Dendritic cell treated with granulocyte-macrophage colony-stimulating factor and Interleukin-4, amounts not matched to agents 40 ng/mL and 50 ng/mL, for 4 days (primary cell): ENCODE measurements at regions of chr1 and their contacts with region 1.

Region 1: DNA sequence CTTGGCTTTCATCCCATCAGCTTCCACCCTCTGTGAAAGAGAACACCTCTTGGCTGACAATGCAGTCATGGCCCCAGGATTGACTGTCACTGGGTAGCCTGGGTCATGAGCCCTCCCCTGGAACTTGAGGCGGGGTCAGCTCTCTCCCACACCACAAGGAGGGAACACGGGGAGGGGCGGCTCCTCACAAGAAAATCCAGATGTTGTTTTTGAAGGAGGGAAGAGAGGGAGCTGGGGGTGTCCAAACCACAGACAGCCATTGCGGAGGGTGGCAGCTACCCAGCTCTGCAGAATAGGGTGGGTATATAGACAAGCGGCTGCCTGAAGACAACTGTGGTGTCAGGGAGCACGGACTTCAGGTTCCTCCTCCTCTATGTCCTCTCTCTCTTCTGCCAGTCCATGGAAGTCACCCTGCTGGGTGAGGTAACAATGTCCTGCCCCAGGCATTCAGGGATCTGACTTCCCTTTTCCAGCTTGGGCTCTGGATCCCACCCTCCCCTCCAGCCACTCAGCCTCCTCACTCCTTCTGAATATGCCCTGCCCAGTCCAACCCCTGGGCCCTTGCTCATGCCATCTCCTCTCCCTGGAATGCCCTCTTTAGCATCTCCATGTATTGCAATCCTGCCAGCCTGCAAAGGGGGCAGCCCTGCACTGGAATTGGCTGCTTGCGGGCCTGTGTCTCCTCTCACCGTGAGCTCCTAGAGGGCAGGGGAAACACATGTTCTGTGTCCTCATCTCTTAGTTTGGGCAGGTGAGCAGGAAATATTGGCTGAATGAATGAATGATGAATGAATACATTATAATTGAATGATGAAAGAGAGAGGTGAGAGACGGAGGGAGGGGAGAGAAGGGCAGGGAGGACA is 60.9 kb upstream of the RUNX3 start:
- H3K4me3 Mint-ChIP-seq: no peak overlapping the region
- H3K27ac Mint-ChIP-seq: peak overlapping the region; percentile 86
- H3K4me1 Mint-ChIP-seq: peaks cover 65% of the 10 kb centered on the region
- H3K27me3 Mint-ChIP-seq: peaks cover 41% of the 10 kb centered on the region

Region 2: DNA sequence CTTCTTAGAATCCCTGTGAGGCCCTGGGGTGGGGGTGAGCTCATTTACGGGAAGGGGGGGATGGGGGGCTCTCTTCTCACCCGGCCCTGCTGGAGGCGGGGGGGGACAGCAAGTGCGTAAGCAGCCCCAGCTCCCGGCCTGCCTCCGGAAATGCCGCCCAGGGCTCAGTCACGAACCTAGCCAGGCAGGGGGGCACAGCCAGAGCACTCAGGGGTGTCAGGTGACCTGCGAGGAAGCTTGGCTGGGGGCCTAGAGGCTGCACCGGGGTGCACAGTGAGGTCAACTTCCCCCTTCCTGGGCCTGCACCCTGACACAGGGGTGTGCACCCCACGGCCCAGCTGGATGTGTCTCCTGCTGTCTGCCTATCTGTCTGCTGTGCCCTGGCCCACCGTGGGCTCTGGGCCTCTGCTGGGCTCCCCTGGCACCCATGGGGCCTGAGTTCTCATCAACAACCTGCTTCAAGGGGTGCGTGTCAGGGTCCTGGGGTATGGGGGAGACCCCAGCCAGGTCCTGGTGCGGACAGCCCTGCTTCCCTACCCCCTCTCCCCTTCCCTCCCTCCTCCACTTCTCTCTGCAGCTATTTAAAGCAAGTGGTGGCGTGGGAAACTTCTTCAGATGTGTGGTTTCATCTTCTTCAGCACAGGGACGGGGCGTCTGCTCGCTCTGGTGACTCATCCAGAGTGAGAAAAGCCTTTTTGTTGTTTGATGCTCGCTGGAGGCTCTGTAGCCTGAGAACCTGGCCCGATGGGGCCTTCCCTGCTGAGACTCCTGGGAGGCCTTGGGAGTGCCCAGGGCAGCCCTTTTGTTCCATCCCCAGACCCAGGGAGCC is 31.6 kb after region 1 on chr1:
- intact Hi-C with region 1: loop called (anchors 1 kb)
- H3K4me3 Mint-ChIP-seq: no peak overlapping the region
- H3K27ac Mint-ChIP-seq: peak overlapping the region; percentile 76
- H3K4me1 Mint-ChIP-seq: peaks cover 42% of the 10 kb centered on the region
- H3K27me3 Mint-ChIP-seq: peaks cover 25% of the 10 kb centered on the region

Region 3: GRCh38 chr1:25037174-25038074 is 46.4 kb after region 1 on chr1:
- intact Hi-C with region 1: no loop called
- H3K4me3 Mint-ChIP-seq: no peak overlapping the region
- H3K27ac Mint-ChIP-seq: no peak overlapping the region
- H3K4me1 Mint-ChIP-seq: no peaks in the 10 kb centered on the region
- H3K27me3 Mint-ChIP-seq: peaks cover 30% of the 10 kb centered on the region